H1 (cell line): ENCODE measurements at regions of chr9 and their contacts with region 1.

Region 1: DNA sequence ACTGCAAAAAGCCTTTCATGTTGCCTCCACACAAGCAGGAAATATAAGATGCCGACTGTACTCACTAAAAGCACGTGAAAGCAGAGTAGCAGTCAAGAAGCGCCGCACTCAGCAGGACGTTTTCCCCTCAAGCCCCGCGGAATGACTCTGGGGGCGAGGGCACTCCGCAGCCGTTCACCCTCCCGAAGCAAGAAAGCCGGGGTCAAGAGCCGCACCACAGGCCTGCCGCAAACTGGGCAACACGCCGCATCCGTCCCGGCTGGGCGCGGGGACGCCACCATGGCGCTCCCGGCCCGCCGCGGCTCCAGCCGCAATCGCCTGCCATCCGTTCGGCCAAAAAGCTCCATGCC is 364 bp downstream of the RPS6 start:
- DNase-seq: no peak
- H3K4me3 ChIP-seq: peak overlapping the region; percentile 75 to 99 (median 84)
- H3K27ac ChIP-seq: peak overlapping the region; percentile 92
- H3K4me1 ChIP-seq: peaks cover 0 to 7% (median 2%) of the 10 kb centered on the region in 4 experiments; a peak in 2 of 7 replicates
- H3K27me3 ChIP-seq: no peaks in the 10 kb centered on the region
- CTCF ChIP-seq: no peak
- EP300 ChIP-seq: no peak
- POLR2A ChIP-seq: no peak
- RAD21 ChIP-seq: no peak

Region 2: DNA sequence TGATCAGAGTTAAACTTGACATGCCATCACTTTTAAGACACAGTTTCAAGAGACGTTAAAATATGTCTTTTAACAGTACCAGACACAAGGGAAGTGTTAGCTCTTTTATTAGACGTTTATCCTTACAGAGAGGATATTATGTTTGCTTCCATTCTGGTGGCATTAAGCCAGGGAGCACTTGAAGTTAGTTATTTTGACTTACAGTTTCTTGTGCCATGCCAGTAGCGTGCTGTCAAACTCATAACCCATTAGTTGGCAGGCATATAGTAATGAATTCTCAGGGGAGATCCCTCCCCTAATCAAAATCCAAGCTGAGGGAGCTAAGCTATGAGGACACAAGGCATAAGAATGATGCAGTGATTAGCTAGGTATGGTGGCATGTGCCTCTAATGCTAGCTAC is 66.1 kb before region 1 on chr9:
- CTCF ChIA-PET with region 1: no interaction called
- POLR2A ChIA-PET with region 1: no interaction called
- DNase-seq: no peak
- H3K4me3 ChIP-seq: no peak overlapping the region
- H3K27ac ChIP-seq: no peak overlapping the region
- H3K4me1 ChIP-seq: no peaks in the 10 kb centered on the region
- H3K27me3 ChIP-seq: no peaks in the 10 kb centered on the region
- CTCF ChIP-seq: no peak
- EP300 ChIP-seq: no peak
- POLR2A ChIP-seq: no peak
- RAD21 ChIP-seq: no peak

Region 3: DNA sequence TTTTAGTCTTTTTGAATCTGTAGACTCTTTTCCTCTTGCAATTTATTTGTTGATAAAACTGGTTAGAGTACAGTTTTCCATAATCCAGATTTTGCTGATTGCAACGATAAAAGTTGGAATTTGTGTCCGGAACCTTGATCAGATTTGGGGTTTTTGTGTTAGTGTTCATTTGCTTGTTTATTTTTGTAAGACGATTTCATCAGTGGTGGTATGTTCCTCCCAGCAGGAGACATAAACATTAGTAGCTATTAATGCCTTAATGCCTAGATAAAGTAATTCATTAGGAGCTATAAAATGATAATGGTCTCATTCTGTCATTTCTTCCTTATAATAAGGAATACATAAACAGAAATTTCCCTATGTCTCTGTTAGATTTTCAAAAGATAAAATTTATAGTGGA is 21.0 kb before region 1 on chr9:
- CTCF ChIA-PET with region 1: interaction called, 5 read pairs
- POLR2A ChIA-PET with region 1: interaction called, 113 read pairs
- DNase-seq: no peak
- H3K4me3 ChIP-seq: no peak overlapping the region
- H3K27ac ChIP-seq: no peak overlapping the region
- H3K4me1 ChIP-seq: no peaks in the 10 kb centered on the region
- H3K27me3 ChIP-seq: no peaks in the 10 kb centered on the region
- CTCF ChIP-seq: no peak
- EP300 ChIP-seq: no peak
- POLR2A ChIP-seq: no peak
- RAD21 ChIP-seq: no peak

Region 4: DNA sequence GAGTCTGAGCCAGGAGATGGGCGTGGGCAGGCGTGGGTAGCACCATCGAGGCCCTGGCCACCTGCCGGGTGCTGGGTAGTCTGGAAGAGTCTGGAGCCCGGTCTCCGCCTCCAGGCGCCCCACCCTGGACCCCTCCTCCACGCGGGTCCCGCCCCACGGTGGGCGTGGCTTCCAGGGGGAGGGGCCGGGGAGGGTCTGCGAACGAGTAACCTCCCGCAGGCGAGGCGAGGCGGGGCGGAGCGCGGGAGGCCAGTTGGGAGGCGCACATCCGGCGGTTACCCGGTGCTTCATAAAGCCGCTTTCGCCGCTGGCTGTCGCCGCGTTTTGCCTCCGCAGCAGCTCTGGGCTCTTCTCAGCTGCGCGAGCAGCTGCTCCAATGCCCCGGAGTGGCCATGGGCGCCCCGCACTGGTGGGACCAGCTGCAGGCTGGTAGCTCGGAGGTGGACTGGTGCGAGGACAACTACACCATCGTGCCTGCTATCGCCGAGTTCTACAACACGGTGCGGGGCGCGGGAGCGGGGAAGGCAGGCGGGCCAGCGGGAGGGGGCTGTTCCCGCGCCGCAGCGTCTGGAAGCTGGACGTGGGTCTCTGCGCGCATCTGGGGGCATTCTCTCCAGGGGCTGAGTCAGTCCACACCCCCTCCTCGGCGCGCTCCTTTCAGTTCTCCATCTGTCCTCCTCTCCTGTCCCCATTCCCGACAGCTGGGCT is 29.2 kb after region 1 on chr9 and contains the start of gene ACER2:
- CTCF ChIA-PET with region 1: no interaction called
- POLR2A ChIA-PET with region 1: interaction called, 16 read pairs
- DNase-seq: peak; percentile 79 to 98
- H3K4me3 ChIP-seq: peak within 1 kb of the TSS; percentile 65 to 88 (median 80)
- H3K27ac ChIP-seq: no peak within 1 kb of the TSS; the same call in 1 of the 2 replicates
- H3K4me1 ChIP-seq: peaks cover 1 to 10% (median 7%) of the 10 kb centered on the region in 4 experiments; a peak in 5 of 7 replicates
- H3K27me3 ChIP-seq: peaks cover 0 to 7% (median 0%) of the 10 kb centered on the region in 4 experiments; a peak in 2 of 7 replicates
- CTCF ChIP-seq: 0 out of 4 replicates have a peak, but pooled peaks of 1 of the 3 experiments have one; percentile 4
- EP300 ChIP-seq: no peak
- POLR2A ChIP-seq: peak; percentile 72 to 85
- RAD21 ChIP-seq: peak in 1 of 2 experiments; percentile 27; a peak in 1 of 4 replicates
- total RNA-seq, gene ACER2: 8.8 and 9.9 TPM in 2 replicates

Region 5: GRCh38 chr9:19441730-19442129 is 62.1 kb after region 1 on chr9:
- CTCF ChIA-PET with region 1: interaction called, 3 read pairs
- POLR2A ChIA-PET with region 1: interaction called, 33 read pairs
- DNase-seq: no peak
- H3K4me3 ChIP-seq: no peak overlapping the region
- H3K27ac ChIP-seq: no peak overlapping the region
- H3K4me1 ChIP-seq: peaks cover 12 to 20% (median 18%) of the 10 kb centered on the region in 4 experiments
- H3K27me3 ChIP-seq: no peaks in the 10 kb centered on the region
- CTCF ChIP-seq: no peak
- EP300 ChIP-seq: no peak
- POLR2A ChIP-seq: no peak
- RAD21 ChIP-seq: no peak

Region 6: GRCh38 chr9:19464764-19465585 is 85.3 kb after region 1 on chr9:
- CTCF ChIA-PET with region 1: interaction called, 5 read pairs
- POLR2A ChIA-PET with region 1: interaction called, 28 read pairs
- DNase-seq: peak; percentile 51 to 93
- H3K4me3 ChIP-seq: peak overlapping the region; percentile 44 to 73 (median 46)
- H3K27ac ChIP-seq: no peak overlapping the region
- H3K4me1 ChIP-seq: no peaks in the 10 kb centered on the region
- H3K27me3 ChIP-seq: peaks cover 0 to 2% (median 0%) of the 10 kb centered on the region in 4 experiments; a peak in 2 of 7 replicates
- CTCF ChIP-seq: peak; percentile 67 to 90 (median 87)
- EP300 ChIP-seq: no peak
- POLR2A ChIP-seq: peak in 1 of 2 experiments; percentile 54; a peak in 1 of 3 replicates
- RAD21 ChIP-seq: peak; percentile 29 to 52; a peak in 2 of 4 replicates